Breast epithelium (tissue), 4 donors: ENCODE measurements at regions of chr10 and their contacts with region 1.

Region 1: DNA sequence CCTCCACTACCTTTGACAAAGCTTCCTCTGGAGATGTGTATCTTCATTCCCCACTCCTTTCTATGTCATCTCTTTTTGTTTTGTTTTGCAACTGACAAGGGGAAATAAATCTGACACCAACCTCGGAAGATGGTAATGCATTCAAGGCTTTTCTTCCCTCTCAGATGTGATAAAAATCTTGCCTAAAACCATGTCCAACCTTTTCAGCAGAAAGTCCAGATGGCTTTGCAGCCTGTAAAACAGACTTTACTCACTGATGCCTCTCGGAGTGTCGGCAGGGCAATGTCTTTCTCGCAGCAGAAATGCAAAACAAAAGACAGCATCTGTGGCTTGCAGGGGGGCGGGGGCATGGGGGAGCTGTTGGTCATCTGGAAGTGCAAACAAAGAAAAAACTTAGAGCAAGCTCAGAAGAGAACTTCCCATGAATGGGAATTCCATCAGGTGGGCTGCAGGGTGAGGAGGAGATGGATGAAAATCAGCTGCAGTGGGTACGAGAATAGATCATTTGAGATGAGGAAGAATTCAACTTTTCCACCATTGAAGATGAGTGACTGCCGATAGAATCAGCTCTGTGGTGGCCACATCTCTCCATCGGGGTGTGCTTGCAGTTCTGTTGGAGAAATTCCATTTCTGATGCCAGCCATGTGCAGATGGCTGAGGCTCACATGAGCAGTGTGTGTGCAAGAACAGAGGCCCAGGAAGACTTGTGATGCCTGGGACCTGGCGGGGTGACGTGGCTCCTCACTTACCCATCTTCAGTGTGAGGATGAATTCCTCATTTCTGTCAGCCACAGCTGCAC is 237.7 kb downstream of the WDR37 start:
- DNase-seq: no peak
- H3K4me3 ChIP-seq: no peak overlapping the region
- H3K27ac ChIP-seq: no peak overlapping the region
- H3K4me1 ChIP-seq: no peaks in the 10 kb centered on the region
- H3K27me3 ChIP-seq: peaks cover 0 to 17% of the 10 kb centered on the region in 2 donors
- CTCF ChIP-seq: no peak
- POLR2A ChIP-seq: no peak

Region 2: GRCh38 chr10:2196272-2196671 is 902.4 kb after region 1 on chr10:
- intact Hi-C with region 1: loop called (anchors 5 kb)
- DNase-seq: no peak
- H3K4me3 ChIP-seq: no peak overlapping the region
- H3K27ac ChIP-seq: no peak overlapping the region
- H3K4me1 ChIP-seq: no peaks in the 10 kb centered on the region
- H3K27me3 ChIP-seq: no peaks in the 10 kb centered on the region
- CTCF ChIP-seq: no peak
- POLR2A ChIP-seq: no peak